Left lung (tissue), 14 donors: ENCODE measurements at regions of chr14 and their contacts with region 1.

Region 1: GRCh38 chr14:71720978-71721624 is 211.1 kb upstream of the RGS6 start:
- DNase-seq: no peak
- ATAC-seq: peak; percentile 93
- H3K4me3 ChIP-seq: no peak overlapping the region
- H3K27ac ChIP-seq: no peak overlapping the region
- H3K4me1 ChIP-seq: peaks cover 5 to 6% of the 10 kb centered on the region in 2 donors
- H3K27me3 ChIP-seq: no peaks in the 10 kb centered on the region
- CTCF ChIP-seq: peak; percentile 44 to 53

Region 2: DNA sequence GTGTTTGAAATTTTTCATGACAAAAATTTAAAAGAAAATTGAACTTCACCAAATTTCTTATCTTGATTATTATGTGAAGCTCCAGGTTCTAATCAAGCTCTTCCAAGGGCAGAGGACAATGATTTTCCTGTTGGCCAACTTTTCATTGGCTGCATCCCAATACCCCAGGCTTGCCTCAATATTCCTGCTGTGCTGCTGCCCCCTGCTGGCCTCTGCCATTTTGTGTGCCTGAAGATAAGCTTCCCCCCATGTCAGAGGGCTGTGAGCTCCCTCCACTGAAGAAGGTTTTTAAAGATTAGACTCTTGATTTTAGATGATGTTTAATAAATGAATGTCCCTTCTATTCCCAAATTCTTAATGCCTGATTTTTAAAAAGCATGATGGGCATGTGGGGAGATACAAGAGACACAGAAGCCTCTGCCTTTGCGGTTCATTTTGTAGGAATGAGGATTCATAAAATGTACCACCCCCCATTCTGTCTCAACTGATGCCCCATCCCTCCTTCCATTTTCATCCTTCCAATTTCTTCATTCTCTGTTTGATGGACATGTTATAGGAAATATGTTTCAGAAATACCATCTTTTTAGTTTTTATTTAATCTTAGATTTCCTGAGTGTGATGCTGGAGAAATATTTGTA is 134.4 kb after region 1 on chr14:
- intact Hi-C with region 1: loop called in 1 of 2 experiments (anchors 10 kb)
- DNase-seq: peak; percentile 7 to 83 (median 52)
- ATAC-seq: peak; percentile 94
- H3K4me3 ChIP-seq: no peak overlapping the region
- H3K27ac ChIP-seq: no peak overlapping the region
- H3K4me1 ChIP-seq: peaks cover 0 to 6% of the 10 kb centered on the region in 2 donors
- H3K27me3 ChIP-seq: no peaks in the 10 kb centered on the region
- CTCF ChIP-seq: peak; percentile 64 to 69